Activated CD4-positive, alpha-beta memory T cell treated with anti-CD3 and anti-CD28 coated beads for 36 hours (primary cell): ENCODE measurements at regions of chr2 and their contacts with region 1.

Region 1: DNA sequence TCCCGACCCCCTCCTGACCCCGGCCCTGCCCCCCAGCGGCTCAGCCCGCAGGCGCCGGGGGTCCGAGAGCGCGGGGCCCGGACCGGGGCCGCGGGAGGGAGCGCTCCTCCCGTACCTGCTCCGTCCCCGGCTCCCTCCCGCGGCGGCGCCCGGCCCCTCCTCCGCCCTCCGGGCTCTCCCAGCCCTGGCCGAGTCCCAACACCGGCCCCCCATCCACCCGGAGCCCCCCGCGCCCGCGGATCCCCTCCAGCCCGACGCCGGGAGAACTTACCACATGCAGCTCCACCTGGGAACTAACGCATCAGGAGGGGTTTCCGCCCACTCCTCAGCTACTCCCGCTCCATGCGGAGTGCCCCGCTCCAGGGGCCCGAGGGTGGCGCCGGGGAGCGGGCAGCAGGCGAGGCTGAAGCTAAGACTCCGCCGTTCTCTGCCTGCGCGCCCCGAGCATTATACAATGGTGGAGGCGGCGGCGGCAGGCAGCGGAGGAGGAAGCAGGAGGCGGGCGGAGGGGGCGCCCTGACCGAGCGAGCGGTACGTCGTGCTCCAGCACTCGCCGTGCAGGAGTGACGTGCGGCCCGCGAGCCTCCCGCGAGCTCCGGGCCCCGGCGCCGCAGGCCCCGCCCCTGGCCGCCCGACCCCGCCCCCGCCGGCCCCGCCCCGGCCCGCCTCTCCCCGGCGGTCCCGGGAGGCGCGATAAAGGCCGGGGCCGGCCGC is at the start of gene SERTAD2:
- DNase-seq: peak; percentile 86
- H3K4me3 Mint-ChIP-seq: peak within 1 kb of the TSS; percentile 79
- H3K27ac Mint-ChIP-seq: peak within 1 kb of the TSS; percentile 72
- H3K4me1 Mint-ChIP-seq: peaks cover 51% of the 10 kb centered on the region
- H3K27me3 Mint-ChIP-seq: no peaks in the 10 kb centered on the region
- total RNA-seq, gene SERTAD2: 11.3 to 11.4 TPM

Region 2: GRCh38 chr2:64000630-64001381 is 652.7 kb before region 1 on chr2:
- CTCF ChIA-PET with region 1: no interaction called
- POLR2A ChIA-PET with region 1: no interaction called
- intact Hi-C with region 1: no loop called
- DNase-seq: no peak
- H3K4me3 Mint-ChIP-seq: no peak overlapping the region
- H3K27ac Mint-ChIP-seq: no peak overlapping the region
- H3K4me1 Mint-ChIP-seq: peaks cover 11% of the 10 kb centered on the region
- H3K27me3 Mint-ChIP-seq: no peaks in the 10 kb centered on the region

Region 3: GRCh38 chr2:64434039-64434657 is 219.4 kb before region 1 on chr2:
- CTCF ChIA-PET with region 1: no interaction called
- POLR2A ChIA-PET with region 1: no interaction called
- intact Hi-C with region 1: no loop called
- DNase-seq: no peak
- H3K4me3 Mint-ChIP-seq: no peak overlapping the region
- H3K27ac Mint-ChIP-seq: no peak overlapping the region
- H3K4me1 Mint-ChIP-seq: no peaks in the 10 kb centered on the region
- H3K27me3 Mint-ChIP-seq: peaks cover 17% of the 10 kb centered on the region

Region 4: GRCh38 chr2:64666810-64667438 is 13.4 kb after region 1 on chr2:
- CTCF ChIA-PET with region 1: interaction called, 10 read pairs
- POLR2A ChIA-PET with region 1: interaction called, 19 read pairs
- intact Hi-C with region 1: no loop called
- DNase-seq: no peak
- H3K4me3 Mint-ChIP-seq: no peak overlapping the region
- H3K27ac Mint-ChIP-seq: peak overlapping the region; percentile 10
- H3K4me1 Mint-ChIP-seq: peaks cover 33% of the 10 kb centered on the region
- H3K27me3 Mint-ChIP-seq: no peaks in the 10 kb centered on the region

Region 5: GRCh38 chr2:64698668-64699444 is 45.4 kb after region 1 on chr2:
- CTCF ChIA-PET with region 1: interaction called, 7 read pairs
- POLR2A ChIA-PET with region 1: interaction called, 6 read pairs
- intact Hi-C with region 1: loop called (anchors 1 kb)
- DNase-seq: no peak
- H3K4me3 Mint-ChIP-seq: peak overlapping the region; percentile 47
- H3K27ac Mint-ChIP-seq: peak overlapping the region; percentile 72
- H3K4me1 Mint-ChIP-seq: peaks cover 41% of the 10 kb centered on the region
- H3K27me3 Mint-ChIP-seq: no peaks in the 10 kb centered on the region

Region 6: DNA sequence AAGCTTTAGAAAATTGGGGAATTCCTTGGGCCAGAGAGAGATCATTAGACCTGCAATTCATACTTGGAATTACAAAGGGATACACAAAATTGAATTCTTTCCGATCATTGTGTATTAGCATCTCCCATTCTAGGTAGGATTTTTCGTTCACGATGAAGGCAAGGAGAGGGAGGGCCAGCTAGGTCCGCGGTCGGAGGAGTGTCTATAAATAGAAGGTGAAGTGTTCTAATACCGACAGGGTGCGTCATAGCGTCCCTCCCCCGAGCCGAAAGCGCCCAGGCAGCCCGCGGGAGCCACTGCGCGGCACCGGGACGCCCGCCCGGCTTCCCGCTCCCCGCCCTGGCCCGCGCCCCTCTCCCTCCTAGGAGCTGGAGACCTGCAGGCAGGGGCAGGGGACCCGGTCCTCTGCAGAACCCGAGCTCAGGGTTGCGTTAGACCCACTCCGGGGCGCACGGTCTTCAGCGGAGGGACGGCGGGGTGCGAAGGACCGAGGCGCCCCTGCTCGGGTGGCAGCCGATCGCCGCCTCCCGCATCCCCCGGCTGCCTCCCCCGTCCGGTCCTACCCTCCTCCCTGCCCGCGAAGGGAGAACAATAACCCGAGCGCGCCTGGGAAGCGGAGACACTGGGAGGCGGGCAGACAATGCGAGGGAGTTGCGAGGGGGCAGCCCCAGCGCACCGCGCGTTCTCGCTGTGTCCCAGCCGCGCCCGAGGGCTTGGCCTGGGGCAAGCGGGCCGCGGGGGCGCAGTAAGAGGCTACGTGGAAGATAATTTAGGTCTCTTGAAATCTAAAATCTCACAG is 114.4 kb after region 1 on chr2:
- CTCF ChIA-PET with region 1: interaction called, 8 read pairs
- POLR2A ChIA-PET with region 1: interaction called, 4 read pairs
- intact Hi-C with region 1: loop called (anchors 2 kb)
- DNase-seq: peak; percentile 84
- H3K4me3 Mint-ChIP-seq: peak overlapping the region; percentile 80
- H3K27ac Mint-ChIP-seq: peak overlapping the region; percentile 77
- H3K4me1 Mint-ChIP-seq: peaks cover 19% of the 10 kb centered on the region
- H3K27me3 Mint-ChIP-seq: no peaks in the 10 kb centered on the region

Region 7: DNA sequence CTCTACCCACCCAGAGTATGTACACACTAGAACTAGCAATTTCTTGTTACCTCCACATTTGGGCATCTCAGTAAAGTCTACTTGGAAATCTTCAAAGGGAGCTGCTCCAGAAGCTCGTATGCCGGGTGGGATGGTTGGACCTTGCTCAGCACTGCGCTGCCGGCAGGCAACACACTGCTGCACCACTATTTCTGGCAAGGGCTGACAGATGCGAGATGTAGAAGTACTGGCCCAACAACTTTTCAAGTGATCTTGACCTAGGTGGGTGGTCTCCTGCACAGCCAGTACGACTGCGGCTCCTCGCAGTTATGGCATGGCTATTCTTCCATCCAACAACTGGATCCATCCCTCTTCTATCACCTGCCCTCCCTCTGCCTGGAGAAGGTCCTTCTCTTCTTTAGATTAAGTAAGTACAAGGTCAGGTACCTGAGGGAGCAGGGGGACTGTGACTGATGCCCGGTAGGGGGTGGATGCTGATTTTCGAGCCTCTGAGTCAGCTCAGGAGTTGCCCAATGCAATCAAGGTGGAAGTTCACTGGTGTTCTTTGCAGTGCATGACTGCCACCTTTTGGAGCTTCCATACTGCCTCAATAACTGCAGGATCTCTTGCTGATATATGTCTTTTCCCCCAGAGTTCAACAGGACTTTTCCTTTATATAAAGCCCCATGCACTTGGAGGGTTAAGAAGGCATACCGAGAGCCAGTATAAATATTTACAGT is 235.2 kb after region 1 on chr2:
- CTCF ChIA-PET with region 1: no interaction called
- POLR2A ChIA-PET with region 1: no interaction called
- intact Hi-C with region 1: no loop called
- DNase-seq: no peak
- H3K4me3 Mint-ChIP-seq: no peak overlapping the region
- H3K27ac Mint-ChIP-seq: no peak overlapping the region
- H3K4me1 Mint-ChIP-seq: no peaks in the 10 kb centered on the region
- H3K27me3 Mint-ChIP-seq: peaks cover 2% of the 10 kb centered on the region

Region 8: DNA sequence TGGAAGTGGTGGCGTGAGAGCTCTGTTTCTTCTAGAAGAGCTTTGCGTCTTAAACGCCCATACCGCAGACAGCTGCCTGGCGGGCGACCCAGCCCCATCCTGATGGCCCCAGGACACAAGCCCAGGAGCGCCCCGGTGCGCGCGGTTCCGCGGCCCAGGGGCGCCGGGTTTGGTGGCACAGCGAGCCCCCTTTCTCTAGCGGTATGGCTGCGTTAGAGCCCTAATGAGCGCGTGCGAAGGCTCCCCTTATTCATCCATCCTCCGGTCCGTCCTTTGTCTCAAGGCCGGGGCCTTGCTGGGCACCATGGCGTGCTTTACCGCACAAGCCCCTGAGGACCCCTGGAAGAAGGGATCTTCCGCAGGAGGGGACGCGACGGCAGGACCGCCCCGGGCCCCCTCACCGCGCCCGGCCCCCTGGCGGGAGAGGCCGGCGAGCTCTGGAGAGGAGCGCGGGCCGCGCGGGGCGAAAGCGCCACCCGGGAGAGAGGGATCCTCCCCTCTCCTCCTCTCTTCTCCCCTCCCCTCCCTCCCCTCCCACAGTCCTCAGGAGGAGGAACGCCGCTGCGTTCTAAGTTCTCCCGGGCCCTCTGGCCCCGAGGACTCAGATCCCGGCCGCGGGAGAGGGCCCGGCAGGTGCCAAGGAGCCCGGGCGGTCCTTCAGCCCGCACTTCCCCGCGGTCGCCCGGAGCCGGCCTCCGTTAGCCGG is 335.1 kb after region 1 on chr2:
- CTCF ChIA-PET with region 1: no interaction called
- POLR2A ChIA-PET with region 1: no interaction called
- intact Hi-C with region 1: loop called (anchors 2 kb)
- DNase-seq: peak; percentile 81
- H3K4me3 Mint-ChIP-seq: peak overlapping the region; percentile 59
- H3K27ac Mint-ChIP-seq: peak overlapping the region; percentile 65
- H3K4me1 Mint-ChIP-seq: peaks cover 54% of the 10 kb centered on the region
- H3K27me3 Mint-ChIP-seq: peaks cover 5% of the 10 kb centered on the region